HCT116 (cell line): ENCODE measurements at regions of chr12 and their contacts with region 1.

Region 1: GRCh38 chr12:66025477-66025876 is 105.1 kb downstream of the LLPH start:
- DNase-seq: peak; percentile 33
- ATAC-seq: peak; percentile 84
- H3K4me3 ChIP-seq: no peak overlapping the region
- H3K27ac ChIP-seq: no peak overlapping the region; the same call in 1 of the 2 replicates
- H3K4me1 ChIP-seq: peaks cover 8 to 25% of the 10 kb centered on the region in 2 experiments
- H3K27me3 ChIP-seq: no peaks in the 10 kb centered on the region
- CTCF ChIP-seq: no peak
- POLR2A ChIP-seq: no peak
- RAD21 ChIP-seq: no peak

Region 2: DNA sequence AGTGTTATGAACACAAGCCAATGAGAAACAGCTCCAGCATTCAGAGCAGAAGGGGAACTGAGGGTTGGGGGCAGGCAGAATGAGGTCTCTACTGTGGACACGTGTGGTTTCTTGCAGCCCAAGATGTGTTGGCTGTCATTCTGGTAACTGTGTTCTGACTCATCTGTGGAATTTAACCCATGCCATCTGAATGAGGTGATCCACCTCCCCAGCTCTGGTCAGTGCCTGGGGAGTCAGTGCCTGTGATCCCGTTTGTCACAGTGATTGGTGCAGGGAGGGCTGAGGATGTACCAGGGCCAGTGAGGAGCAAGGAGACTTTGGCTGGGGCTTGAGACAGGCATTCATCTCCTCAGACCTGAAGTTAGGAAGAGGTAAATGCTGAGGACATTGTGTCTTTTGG is 530.2 kb before region 1 on chr12:
- CTCF ChIA-PET with region 1: no interaction called
- POLR2A ChIA-PET with region 1: no interaction called
- RAD21 ChIA-PET with region 1: no interaction called
- intact Hi-C with region 1: no loop called
- DNase-seq: peak; percentile 88
- ATAC-seq: peak; percentile 86
- H3K4me3 ChIP-seq: no peak overlapping the region
- H3K27ac ChIP-seq: peak overlapping the region; percentile 87
- H3K4me1 ChIP-seq: peaks cover 84 to 86% of the 10 kb centered on the region in 2 experiments
- H3K27me3 ChIP-seq: no peaks in the 10 kb centered on the region
- CTCF ChIP-seq: no peak
- POLR2A ChIP-seq: peak; percentile 35
- RAD21 ChIP-seq: no peak

Region 3: DNA sequence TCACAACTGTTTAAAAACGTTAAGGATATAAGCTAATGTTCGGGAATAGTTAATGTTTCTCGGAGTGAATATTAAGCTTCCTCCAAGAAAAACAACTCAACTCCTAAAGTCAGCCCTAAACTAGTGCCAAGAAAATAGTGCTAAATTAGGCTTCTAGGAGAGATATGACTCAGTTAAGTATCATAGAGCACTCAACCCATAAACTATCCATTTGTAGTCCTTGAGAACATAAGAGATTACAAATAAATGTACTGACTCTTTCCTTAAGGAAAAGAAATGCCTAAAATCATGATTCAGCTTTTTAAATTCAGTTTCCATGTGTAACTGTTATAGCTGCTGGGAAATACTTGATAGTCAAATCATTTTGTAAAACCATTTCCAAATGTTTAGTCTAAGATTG is 84.1 kb before region 1 on chr12:
- CTCF ChIA-PET with region 1: interaction called, 17 read pairs
- POLR2A ChIA-PET with region 1: no interaction called
- RAD21 ChIA-PET with region 1: no interaction called
- intact Hi-C with region 1: loop called (anchors 1 kb)
- DNase-seq: no peak
- ATAC-seq: no peak
- H3K4me3 ChIP-seq: no peak overlapping the region
- H3K27ac ChIP-seq: peak overlapping the region; percentile 66
- H3K4me1 ChIP-seq: peaks cover 93 to 100% of the 10 kb centered on the region in 2 experiments
- H3K27me3 ChIP-seq: no peaks in the 10 kb centered on the region
- CTCF ChIP-seq: no peak
- POLR2A ChIP-seq: no peak
- RAD21 ChIP-seq: no peak